Endothelial cell of umbilical vein (primary cell): ENCODE measurements at regions of chr1 and their contacts with region 1.

Region 1: GRCh38 chr1:234499119-234499942 is 20.4 kb upstream of the TARBP1 start:
- DNase-seq: peak; percentile 84
- H3K4me3 ChIP-seq: no peak overlapping the region
- H3K27ac ChIP-seq: peak overlapping the region; percentile 26
- H3K4me1 ChIP-seq: peaks cover 8% of the 10 kb centered on the region
- H3K27me3 ChIP-seq: no peaks in the 10 kb centered on the region
- CTCF ChIP-seq: peak; percentile 90 to 94
- POLR2A ChIP-seq: no peak

Region 2: GRCh38 chr1:234486498-234487448 is 12.6 kb before region 1 on chr1:
- CTCF ChIA-PET with region 1: interaction called, 25 read pairs
- POLR2A ChIA-PET with region 1: no interaction called
- dilution Hi-C with region 1: no loop called
- intact Hi-C with region 1: no loop called
- DNase-seq: peak; percentile 84
- H3K4me3 ChIP-seq: no peak overlapping the region
- H3K27ac ChIP-seq: no peak overlapping the region
- H3K4me1 ChIP-seq: peaks cover 7% of the 10 kb centered on the region
- H3K27me3 ChIP-seq: peaks cover 10 to 12% of the 10 kb centered on the region in 2 experiments
- CTCF ChIP-seq: peak; percentile 54 to 55
- POLR2A ChIP-seq: no peak

Region 3: DNA sequence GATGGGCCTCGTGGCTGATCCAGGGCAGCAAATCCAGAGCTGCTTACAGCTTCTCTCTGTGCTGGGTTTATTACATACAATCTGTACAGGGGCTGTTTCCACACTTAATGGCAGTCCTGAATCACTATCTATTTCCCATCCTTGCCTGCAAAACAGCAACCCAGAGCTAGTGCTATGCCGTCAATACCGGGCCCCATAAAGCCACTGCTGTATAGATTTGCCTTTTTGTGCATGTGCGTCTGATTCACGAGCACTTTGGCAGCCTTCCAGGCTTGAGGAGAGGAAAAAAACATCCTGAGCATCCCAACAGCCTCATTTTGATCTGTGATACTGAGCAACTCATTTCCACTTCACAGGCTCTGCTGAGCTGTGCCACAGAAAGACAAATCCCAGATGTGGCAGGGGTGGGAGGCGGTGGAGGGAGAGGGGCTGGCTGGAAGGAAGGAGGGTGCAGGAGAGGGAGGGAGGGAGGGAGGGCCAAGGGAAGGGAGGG is 44.8 kb after region 1 on chr1:
- CTCF ChIA-PET with region 1: interaction called, 14 read pairs
- POLR2A ChIA-PET with region 1: no interaction called
- dilution Hi-C with region 1: no loop called
- intact Hi-C with region 1: loop called (anchors 2 kb)
- DNase-seq: peak; percentile 98
- H3K4me3 ChIP-seq: no peak overlapping the region
- H3K27ac ChIP-seq: peak overlapping the region; percentile 72
- H3K4me1 ChIP-seq: peaks cover 24% of the 10 kb centered on the region
- H3K27me3 ChIP-seq: no peaks in the 10 kb centered on the region
- CTCF ChIP-seq: no peak
- POLR2A ChIP-seq: no peak

Region 4: GRCh38 chr1:234610348-234611152 is 111.2 kb after region 1 on chr1:
- CTCF ChIA-PET with region 1: interaction called, 79 read pairs
- POLR2A ChIA-PET with region 1: no interaction called
- dilution Hi-C with region 1: no loop called
- intact Hi-C with region 1: loop called (anchors 1 kb)
- DNase-seq: peak; percentile 95
- H3K4me3 ChIP-seq: peak overlapping the region; percentile 17 to 78 (median 57)
- H3K27ac ChIP-seq: peak overlapping the region; percentile 99
- H3K4me1 ChIP-seq: peaks cover 37% of the 10 kb centered on the region
- H3K27me3 ChIP-seq: no peaks in the 10 kb centered on the region
- CTCF ChIP-seq: peak in 1 of 2 donors; percentile 14
- POLR2A ChIP-seq: peak; percentile 10

Region 5: DNA sequence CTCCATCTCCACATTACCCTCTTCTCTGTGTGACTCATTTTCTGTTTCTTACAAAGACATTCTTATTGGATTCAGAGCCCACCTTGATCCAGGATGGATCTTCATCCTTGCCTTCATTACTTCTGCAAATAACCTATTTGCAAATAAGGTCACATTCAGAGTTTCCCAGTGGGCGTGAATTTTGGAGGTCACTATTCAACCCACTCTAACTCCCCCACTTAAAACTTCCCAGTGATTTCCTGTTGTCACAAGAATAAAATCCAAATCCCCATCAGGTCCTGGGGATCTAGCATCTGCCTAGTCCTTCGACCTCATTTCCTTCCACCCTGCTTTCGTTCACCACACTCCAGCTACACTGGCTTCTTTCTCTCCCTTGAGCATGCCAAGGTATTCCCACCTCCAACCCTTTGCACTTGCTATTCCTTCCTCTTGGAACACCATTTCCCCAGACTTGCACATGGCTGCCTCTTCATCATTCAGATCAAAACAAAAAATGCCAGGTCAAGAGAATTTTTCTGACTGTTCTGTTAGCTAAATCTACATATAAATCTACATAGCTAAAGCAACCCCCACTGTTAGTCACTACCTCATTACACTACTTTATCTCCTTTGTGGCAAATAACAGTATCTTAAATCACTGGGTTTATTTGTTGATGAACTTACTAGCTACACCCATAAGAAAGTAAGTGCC is 442.1 kb after region 1 on chr1:
- CTCF ChIA-PET with region 1: no interaction called
- POLR2A ChIA-PET with region 1: no interaction called
- dilution Hi-C with region 1: no loop called
- intact Hi-C with region 1: no loop called
- DNase-seq: no peak
- H3K4me3 ChIP-seq: no peak overlapping the region
- H3K27ac ChIP-seq: no peak overlapping the region
- H3K4me1 ChIP-seq: no peaks in the 10 kb centered on the region
- H3K27me3 ChIP-seq: no peaks in the 10 kb centered on the region
- CTCF ChIP-seq: no peak
- POLR2A ChIP-seq: no peak

Region 6: DNA sequence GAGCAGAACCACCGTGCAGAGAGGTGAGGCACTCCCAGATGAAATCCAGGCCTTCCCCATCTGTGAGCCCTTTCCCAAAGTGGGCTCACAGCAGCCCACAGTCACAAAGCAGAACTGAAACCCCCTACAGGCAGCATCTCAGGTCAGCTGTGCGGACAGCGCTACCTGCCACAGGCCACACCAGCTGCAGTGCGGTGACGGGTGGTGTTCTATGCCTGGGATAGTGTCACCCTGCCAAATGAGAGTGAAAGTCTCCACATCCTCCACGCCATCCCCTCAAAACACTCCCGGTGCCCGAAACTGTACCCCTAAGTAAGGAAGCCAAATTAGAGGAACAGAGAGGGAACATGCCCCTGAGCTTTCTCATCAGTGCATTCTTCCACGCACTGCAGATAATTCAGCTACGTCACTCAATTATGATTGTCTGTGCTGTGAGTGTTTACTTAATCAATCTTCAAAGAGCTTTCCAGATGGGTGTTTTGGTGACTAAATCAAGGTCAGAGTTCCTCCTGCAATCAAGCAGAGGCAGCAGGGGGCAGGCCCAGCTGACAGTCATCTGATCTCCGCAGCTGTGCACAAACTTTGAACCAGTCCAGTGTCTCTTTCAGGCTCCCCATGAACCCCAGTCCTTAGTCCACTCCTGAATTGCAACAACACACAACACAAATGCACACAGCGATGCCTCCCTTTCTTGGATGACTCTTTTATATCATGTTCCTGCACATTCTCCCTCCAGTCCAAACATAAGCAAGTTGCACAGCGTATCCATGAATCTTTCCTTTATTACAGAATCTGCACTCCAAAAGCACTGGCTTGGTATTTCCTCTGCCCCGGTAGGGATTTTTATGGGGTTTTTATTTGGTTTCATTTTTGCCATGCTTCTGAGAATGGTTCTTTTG is 479.3 kb after region 1 on chr1:
- CTCF ChIA-PET with region 1: interaction called, 19 read pairs
- POLR2A ChIA-PET with region 1: no interaction called
- dilution Hi-C with region 1: no loop called
- intact Hi-C with region 1: loop called (anchors 1 kb)
- DNase-seq: peak; percentile 86
- H3K4me3 ChIP-seq: no peak overlapping the region
- H3K27ac ChIP-seq: peak overlapping the region; percentile 88
- H3K4me1 ChIP-seq: peaks cover 69% of the 10 kb centered on the region
- H3K27me3 ChIP-seq: no peaks in the 10 kb centered on the region
- CTCF ChIP-seq: no peak
- POLR2A ChIP-seq: no peak

Region 7: DNA sequence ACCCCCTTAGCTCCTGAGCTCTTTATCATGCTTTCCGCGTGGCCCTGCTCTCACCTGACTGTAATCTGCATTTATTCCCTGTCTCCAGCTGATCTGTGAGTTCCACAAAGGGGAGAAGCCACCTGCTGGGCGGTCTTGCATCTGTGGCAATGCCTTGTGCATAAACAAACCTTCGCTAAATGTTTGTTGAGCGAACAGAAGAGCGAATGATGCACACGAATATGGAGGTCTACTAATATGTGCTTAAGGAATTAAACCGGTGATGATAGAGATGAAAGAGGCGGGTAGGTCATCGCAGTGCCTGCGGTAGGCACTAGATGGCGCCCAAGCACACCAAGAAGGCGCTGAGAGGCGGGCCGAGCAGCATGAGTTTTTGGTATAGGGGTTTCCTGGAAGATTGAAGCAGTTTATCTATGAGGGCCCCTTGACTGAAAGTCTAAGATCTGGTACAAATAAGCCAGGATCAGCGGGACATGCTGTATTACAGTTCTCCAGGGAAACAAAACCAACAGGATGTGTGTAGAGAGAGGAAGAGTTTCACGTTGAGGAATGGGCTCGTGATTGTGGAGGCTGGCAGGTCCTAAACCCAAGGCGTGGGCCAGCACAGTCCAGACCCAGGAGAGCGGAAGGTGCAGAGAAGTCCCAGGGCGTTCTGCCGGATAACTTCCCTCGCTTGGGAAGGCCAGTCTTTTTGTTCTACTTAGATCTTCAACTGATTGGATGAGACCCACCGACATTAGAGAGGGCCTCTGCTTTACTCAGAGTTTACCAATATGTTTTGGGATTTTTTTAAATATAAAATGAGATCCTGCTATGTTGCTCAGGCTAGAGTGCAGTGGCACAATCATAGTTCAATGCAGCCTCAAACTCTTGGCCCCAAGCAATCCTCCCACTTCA is 594.6 kb after region 1 on chr1:
- CTCF ChIA-PET with region 1: interaction called, 35 read pairs
- POLR2A ChIA-PET with region 1: no interaction called
- dilution Hi-C with region 1: no loop called
- intact Hi-C with region 1: no loop called
- DNase-seq: peak; percentile 78
- H3K4me3 ChIP-seq: no peak overlapping the region
- H3K27ac ChIP-seq: no peak overlapping the region
- H3K4me1 ChIP-seq: no peaks in the 10 kb centered on the region
- H3K27me3 ChIP-seq: peaks cover 0 to 3% of the 10 kb centered on the region in 2 experiments
- CTCF ChIP-seq: peak; percentile 93
- POLR2A ChIP-seq: no peak